A549 (cell line): ENCODE measurements at regions of chr22 and their contacts with region 1.

Region 1: GRCh38 chr22:30386960-30387827 is at the start of gene RNF215:
- DNase-seq: peak; percentile 63 to 68
- ATAC-seq: peak; percentile 88 to 90
- H3K4me3 ChIP-seq: peak within 1 kb of the TSS; percentile 70
- H3K27ac ChIP-seq: peak within 1 kb of the TSS; percentile 96 to 100
- H3K4me1 ChIP-seq: no peaks in the 10 kb centered on the region; the same call in 2 of the 3 replicates
- CTCF ChIP-seq: peak; percentile 83
- EP300 ChIP-seq: no peak
- POLR2A ChIP-seq: 0 out of 2 replicates have a peak, but pooled peaks have one; percentile 23
- RAD21 ChIP-seq: peak; percentile 63 to 84
- polyA plus RNA-seq, gene RNF215: 16.4 and 19.0 TPM in 2 replicates

Region 2: DNA sequence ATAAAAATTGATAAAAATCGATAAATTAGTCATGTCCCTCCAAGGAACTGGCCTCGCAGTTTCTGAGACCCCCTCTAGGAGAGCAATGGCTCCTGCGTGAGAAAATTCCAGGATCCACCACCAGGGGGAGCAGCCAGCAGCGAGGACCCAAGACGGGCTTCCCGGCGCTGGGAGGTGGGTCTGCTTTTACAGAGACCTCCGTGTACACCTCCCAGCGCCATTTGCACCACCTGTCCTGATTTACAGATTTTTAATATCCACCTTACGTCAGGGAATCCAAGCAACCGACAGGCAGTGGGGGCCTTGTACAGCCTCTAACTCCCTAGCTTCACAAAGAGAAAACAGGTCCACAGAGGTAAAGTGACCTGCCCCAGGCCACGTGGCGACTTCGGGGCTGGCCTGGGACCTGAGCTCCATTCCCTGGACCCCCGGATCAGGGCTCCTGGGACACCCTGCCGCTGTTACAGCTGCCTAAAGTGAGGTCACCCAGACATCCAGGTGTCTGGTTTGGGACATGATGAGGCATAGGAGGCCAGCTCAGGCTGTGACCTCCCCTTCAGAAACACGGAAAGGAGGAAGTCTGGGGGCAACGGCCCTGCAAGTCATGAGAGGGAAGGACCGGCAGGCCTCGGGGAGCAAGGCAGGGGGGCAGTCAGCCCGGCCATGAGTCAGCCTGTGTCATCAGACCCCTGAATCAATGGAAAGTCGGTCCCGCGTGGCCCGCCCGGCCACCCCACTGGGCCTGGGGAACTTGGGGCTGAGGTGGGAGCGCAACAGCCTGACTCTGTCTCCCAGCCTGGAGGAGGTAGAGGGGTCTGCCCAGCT is 124.1 kb before region 1 on chr22:
- CTCF ChIA-PET with region 1: interaction called, 25 read pairs
- POLR2A ChIA-PET with region 1: interaction called, 3 read pairs
- DNase-seq: peak in 1 of 2 experiments; percentile 67
- ATAC-seq: peak; percentile 6 to 59; a peak in 3 of 6 replicates
- H3K4me3 ChIP-seq: no peak overlapping the region
- H3K27ac ChIP-seq: peak overlapping the region; percentile 99 to 100
- H3K4me1 ChIP-seq: peaks cover 55% of the 10 kb centered on the region
- CTCF ChIP-seq: peak; percentile 75
- EP300 ChIP-seq: no peak
- POLR2A ChIP-seq: no peak
- RAD21 ChIP-seq: peak; percentile 48 to 52; a peak in 4 of 5 replicates

Region 3: GRCh38 chr22:30406400-30406799 is 19.2 kb after region 1 on chr22:
- CTCF ChIA-PET with region 1: interaction called, 12 read pairs
- POLR2A ChIA-PET with region 1: interaction called, 7 read pairs
- DNase-seq: no peak
- ATAC-seq: no peak
- H3K4me3 ChIP-seq: no peak overlapping the region
- H3K27ac ChIP-seq: no peak overlapping the region
- H3K4me1 ChIP-seq: peaks cover 12% of the 10 kb centered on the region
- CTCF ChIP-seq: no peak
- EP300 ChIP-seq: no peak
- POLR2A ChIP-seq: no peak
- RAD21 ChIP-seq: no peak

Region 4: GRCh38 chr22:30411780-30412179 is 24.6 kb after region 1 on chr22:
- CTCF ChIA-PET with region 1: interaction called, 12 read pairs
- POLR2A ChIA-PET with region 1: interaction called, 7 read pairs
- DNase-seq: no peak
- ATAC-seq: no peak
- H3K4me3 ChIP-seq: no peak overlapping the region
- H3K27ac ChIP-seq: no peak overlapping the region
- H3K4me1 ChIP-seq: peaks cover 18% of the 10 kb centered on the region
- CTCF ChIP-seq: no peak
- EP300 ChIP-seq: no peak
- POLR2A ChIP-seq: no peak
- RAD21 ChIP-seq: no peak

Region 5: DNA sequence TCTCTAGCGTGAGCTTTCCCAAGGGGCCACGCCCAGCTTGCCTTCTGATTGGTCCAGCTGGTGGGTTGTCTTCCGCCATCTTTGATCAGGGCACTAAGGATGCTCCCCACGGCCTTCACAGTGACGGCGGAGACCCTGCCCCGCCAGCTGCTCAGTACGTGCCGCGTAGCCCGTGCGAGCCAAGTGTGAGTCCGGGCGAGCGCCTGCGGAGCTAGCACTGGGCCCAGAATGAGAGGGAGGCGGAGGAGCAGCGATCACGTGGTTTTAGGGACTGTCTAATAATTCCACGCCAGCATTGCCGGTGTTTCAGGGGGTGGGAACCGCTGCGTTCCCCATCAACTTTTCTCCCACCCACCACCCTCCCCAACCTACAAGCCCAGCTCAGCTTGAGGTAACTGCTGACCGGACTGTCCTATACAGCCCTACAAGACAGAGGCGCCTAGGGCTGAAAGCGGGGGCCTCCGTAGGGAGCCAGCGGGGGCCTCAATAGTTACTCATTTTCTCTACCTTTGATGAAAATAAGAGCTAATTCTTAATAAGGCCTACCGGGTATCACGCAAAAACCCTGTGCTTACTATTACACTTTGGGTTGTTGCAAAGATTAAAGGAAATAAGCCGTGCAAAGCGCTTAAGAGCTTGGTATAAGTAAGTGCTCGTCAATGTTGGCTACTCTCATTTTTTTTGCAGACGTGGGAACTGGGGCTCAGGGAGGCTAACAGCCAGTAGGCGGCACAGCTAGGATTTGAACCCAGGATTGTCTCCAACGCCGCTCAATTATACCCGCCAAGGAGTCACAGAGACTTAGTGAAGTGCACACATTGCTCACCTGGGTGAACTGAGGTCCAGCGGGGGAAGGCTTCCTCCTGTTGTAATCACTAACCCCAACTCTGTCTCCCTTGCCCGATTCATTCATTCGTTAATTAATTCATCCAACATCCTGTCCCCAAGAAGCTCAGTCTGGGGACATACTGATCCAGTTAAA is 37.1 kb after region 1 on chr22:
- CTCF ChIA-PET with region 1: interaction called, 15 read pairs
- POLR2A ChIA-PET with region 1: interaction called, 9 read pairs
- DNase-seq: peak; percentile 95 to 99
- ATAC-seq: peak; percentile 79 to 86
- H3K4me3 ChIP-seq: peak overlapping the region; percentile 68
- H3K27ac ChIP-seq: peak overlapping the region; percentile 97
- H3K4me1 ChIP-seq: peaks cover 43% of the 10 kb centered on the region
- CTCF ChIP-seq: no peak
- EP300 ChIP-seq: no peak
- POLR2A ChIP-seq: peak; percentile 37; the same call in 1 of the 2 replicates
- RAD21 ChIP-seq: no peak

Region 6: GRCh38 chr22:30444632-30445437 is 57.6 kb after region 1 on chr22:
- CTCF ChIA-PET with region 1: no interaction called
- POLR2A ChIA-PET with region 1: no interaction called
- DNase-seq: peak; percentile 62 to 64
- ATAC-seq: peak; percentile 85 to 88; a peak in 5 of 6 replicates
- H3K4me3 ChIP-seq: no peak overlapping the region
- H3K27ac ChIP-seq: peak overlapping the region; percentile 63 to 78
- H3K4me1 ChIP-seq: peaks cover 10% of the 10 kb centered on the region; the same call in 2 of the 3 replicates
- CTCF ChIP-seq: peak; percentile 60
- EP300 ChIP-seq: no peak
- POLR2A ChIP-seq: 0 out of 2 replicates have a peak, but pooled peaks have one; percentile 6
- RAD21 ChIP-seq: peak; percentile 70 to 76

Region 7: GRCh38 chr22:30526656-30527055 is 139.5 kb after region 1 on chr22:
- CTCF ChIA-PET with region 1: no interaction called
- POLR2A ChIA-PET with region 1: no interaction called
- DNase-seq: no peak
- ATAC-seq: no peak
- H3K4me3 ChIP-seq: no peak overlapping the region
- H3K27ac ChIP-seq: no peak overlapping the region
- H3K4me1 ChIP-seq: no peaks in the 10 kb centered on the region
- CTCF ChIP-seq: no peak
- EP300 ChIP-seq: no peak
- POLR2A ChIP-seq: no peak
- RAD21 ChIP-seq: no peak